Activated naive CD4-positive, alpha-beta T cell treated with anti-CD3 and anti-CD28 coated beads, Interleukin-2, amount 10 ng/mL, durations not matched to agents 7 days and 5 days (primary cell): ENCODE measurements at regions of chr5 and their contacts with region 1.

Region 1: GRCh38 chr5:88729084-88729828 is 153.7 kb downstream of the MEF2C start:
- DNase-seq: peak; percentile 66
- H3K4me3 Mint-ChIP-seq: no peak overlapping the region
- H3K27ac Mint-ChIP-seq: no peak overlapping the region
- H3K4me1 Mint-ChIP-seq: no peaks in the 10 kb centered on the region
- H3K27me3 Mint-ChIP-seq: no peaks in the 10 kb centered on the region

Region 2: GRCh38 chr5:88680253-88681132 is 48.8 kb before region 1 on chr5:
- CTCF ChIA-PET with region 1: no interaction called
- DNase-seq: peak; percentile 80
- H3K4me3 Mint-ChIP-seq: peak overlapping the region; percentile 33
- H3K27ac Mint-ChIP-seq: peak overlapping the region; percentile 28
- H3K4me1 Mint-ChIP-seq: peaks cover 14% of the 10 kb centered on the region
- H3K27me3 Mint-ChIP-seq: peaks cover 91% of the 10 kb centered on the region

Region 3: GRCh38 chr5:88740604-88741187 is 11.4 kb after region 1 on chr5:
- CTCF ChIA-PET with region 1: interaction called, 23 read pairs
- DNase-seq: no peak
- H3K4me3 Mint-ChIP-seq: no peak overlapping the region
- H3K27ac Mint-ChIP-seq: no peak overlapping the region
- H3K4me1 Mint-ChIP-seq: no peaks in the 10 kb centered on the region
- H3K27me3 Mint-ChIP-seq: peaks cover 9% of the 10 kb centered on the region

Region 4: GRCh38 chr5:90264689-90265544 is 1535.7 kb after region 1 on chr5:
- CTCF ChIA-PET with region 1: interaction called, 44 read pairs
- DNase-seq: peak; percentile 62
- H3K4me3 Mint-ChIP-seq: no peak overlapping the region
- H3K27ac Mint-ChIP-seq: no peak overlapping the region
- H3K4me1 Mint-ChIP-seq: no peaks in the 10 kb centered on the region
- H3K27me3 Mint-ChIP-seq: no peaks in the 10 kb centered on the region